ENCODE measurements at regions of chr10 and their contacts with region 1.

Region 1: DNA sequence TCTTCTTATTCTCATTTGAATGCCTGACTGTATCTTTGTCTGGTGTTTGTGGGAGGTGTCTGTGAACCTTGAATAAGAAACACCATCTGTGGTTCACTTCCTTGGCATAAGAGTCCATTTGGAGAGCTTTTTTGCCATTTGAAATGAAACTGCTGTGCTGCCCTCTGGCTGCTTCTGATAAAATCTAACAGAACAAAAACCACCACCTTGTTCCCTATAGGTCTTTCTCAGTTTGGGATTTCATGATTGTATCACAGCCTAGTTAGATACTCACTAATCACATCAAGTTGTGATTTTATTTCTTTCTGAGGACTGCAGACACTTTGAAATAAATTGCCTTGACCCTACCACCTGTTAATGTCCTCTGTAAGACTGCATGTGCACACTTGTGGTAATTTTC is 102.7 kb upstream of the FAM13C start:
- DNase-seq: peak in 25 of 42 donors; percentile 12 to 74 (median 36)

Region 2: DNA sequence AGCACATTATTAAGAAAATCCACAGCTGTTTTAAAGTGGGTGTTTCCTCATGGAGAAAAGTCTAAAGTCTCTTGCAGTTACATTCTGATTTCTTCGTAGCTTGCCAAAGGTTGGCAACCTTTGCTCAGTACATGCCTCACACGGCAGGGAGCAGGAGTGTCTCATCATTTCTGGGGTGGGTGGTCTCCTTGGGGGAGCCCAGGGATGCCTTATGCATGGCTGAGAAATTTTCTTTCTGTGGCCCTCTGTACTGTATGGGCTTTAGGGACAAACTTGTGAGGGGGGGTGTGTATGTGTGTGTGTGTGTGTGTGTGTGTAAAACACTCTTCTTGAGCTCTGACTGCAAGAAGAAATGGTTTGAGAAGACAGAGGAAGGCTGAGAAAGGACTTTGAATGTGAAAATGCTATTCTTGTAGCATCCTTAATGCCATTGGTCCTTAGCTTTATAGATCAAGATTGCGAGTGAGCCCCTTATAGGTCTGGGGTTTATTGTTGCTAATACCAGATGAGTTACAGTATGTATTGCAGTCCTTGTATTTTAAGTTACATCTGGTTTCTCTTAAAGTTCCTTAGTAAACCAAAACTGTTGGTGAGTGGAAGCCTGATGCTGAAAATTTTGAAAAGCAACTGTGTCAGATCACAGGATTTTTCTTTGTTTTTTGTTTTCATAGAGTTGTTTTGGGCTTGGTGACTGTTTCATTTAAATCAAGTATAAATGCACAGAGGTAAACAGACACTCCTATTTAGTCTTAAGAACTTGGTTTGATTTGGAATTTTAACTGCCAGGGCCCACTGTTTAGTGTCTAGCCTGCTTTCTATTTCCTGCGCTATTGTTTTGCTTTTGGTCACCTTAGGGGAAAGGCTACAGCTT is 710.4 kb before region 1 on chr10:
- intact Hi-C with region 1: no loop called
- DNase-seq: no peak

Region 3: GRCh38 chr10:58952747-58953466 is 512.2 kb before region 1 on chr10:
- intact Hi-C with region 1: loop called (anchors 10 kb)
- DNase-seq: peak in 34 of 42 donors; percentile 31 to 93 (median 69)

Region 4: DNA sequence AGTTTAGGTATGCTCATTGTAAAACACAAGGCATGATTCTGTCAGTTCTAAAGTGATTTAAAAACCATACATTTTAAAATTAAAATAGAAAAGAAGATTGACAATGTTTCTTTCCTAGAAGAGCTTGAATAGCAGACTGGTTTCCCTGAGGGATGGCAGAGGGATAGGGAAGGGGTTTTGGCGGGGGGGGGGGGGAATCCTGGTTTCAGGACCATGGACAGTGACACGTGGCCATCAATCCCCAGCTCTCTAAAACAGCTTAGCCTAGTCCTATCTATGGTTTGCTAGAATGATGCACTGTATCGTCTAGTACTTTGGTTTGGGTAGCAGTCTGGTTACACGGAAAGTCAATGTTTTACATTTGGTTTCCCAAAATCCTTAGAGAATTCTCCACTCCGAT is 199.9 kb before region 1 on chr10:
- intact Hi-C with region 1: loop called (anchors 10 kb)
- DNase-seq: no peak

Region 5: GRCh38 chr10:59517996-59518395 is 52.9 kb after region 1 on chr10:
- intact Hi-C with region 1: no loop called
- DNase-seq: peak in 12 of 42 donors; percentile 15 to 55 (median 22)

Region 6: GRCh38 chr10:59657724-59658123 is 192.6 kb after region 1 on chr10:
- intact Hi-C with region 1: no loop called
- DNase-seq: no peak

Region 7: DNA sequence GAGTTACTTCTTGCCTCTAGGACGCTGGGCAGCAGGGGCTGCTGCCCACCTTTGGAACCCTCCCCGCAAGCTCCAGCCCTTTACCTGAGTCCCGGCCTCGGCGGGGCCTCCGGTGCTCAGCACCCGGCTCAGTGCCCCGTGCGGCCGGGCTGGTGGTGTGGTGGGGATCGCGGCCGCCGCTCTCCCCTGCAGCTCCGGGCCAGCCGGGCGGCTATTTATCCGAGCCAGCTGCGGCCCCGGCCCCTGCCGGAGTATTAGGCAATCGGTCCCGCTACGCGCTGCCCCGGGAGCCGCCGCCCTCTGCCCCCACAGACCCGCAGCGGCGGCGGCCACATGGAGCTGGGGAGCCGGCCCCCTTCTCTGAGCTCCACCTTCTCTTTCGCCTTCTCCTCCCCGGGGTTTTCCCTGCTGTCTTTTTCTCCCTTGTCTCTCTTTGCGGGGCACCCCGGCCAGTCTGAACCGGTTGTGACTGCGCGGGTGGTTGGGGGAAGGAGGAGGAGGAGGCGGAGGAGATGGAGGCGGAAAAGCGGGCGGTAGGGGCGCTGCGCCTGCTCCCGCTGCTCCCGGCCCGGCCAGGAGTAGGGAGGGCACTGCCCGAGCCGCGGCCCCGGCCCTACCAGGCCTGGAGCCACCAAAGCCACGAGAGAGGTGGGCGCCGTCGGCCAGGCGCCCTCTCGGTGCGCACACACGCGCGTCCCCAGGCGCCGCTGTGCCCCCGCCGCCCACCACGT is 244.5 kb after region 1 on chr10 and contains the start of gene SLC16A9:
- intact Hi-C with region 1: no loop called
- DNase-seq: peak in 41 of 42 donors; percentile 9 to 84 (median 63)